CD8-positive, alpha-beta T cell (primary cell): ENCODE measurements at regions of chr10 and their contacts with region 1.

Region 1: GRCh38 chr10:74589226-74589673 is 237.2 kb upstream of the KAT6B start:
- DNase-seq: peak; percentile 70 to 97 (median 86)
- ATAC-seq: peak; percentile 76
- H3K4me3 ChIP-seq: no peak overlapping the region
- H3K4me3 Mint-ChIP-seq: peak overlapping the region; percentile 49
- H3K27ac ChIP-seq: peak overlapping the region; percentile 36 to 61
- H3K27ac Mint-ChIP-seq: peak overlapping the region; percentile 87
- H3K4me1 ChIP-seq: peaks cover 48% of the 10 kb centered on the region
- H3K4me1 Mint-ChIP-seq: peaks cover 61% of the 10 kb centered on the region
- H3K27me3 ChIP-seq: no peaks in the 10 kb centered on the region
- H3K27me3 Mint-ChIP-seq: no peaks in the 10 kb centered on the region
- CTCF ChIP-seq: no peak

Region 2: GRCh38 chr10:74176380-74177139 is 412.7 kb before region 1 on chr10:
- CTCF ChIA-PET with region 1: no interaction called
- POLR2A ChIA-PET with region 1: no interaction called
- intact Hi-C with region 1: loop called in 1 of 2 experiments (anchors 5 kb)
- DNase-seq: peak; percentile 89 to 99 (median 96)
- ATAC-seq: peak; percentile 93
- H3K4me3 ChIP-seq: peak overlapping the region; percentile 89 to 91
- H3K4me3 Mint-ChIP-seq: peak overlapping the region; percentile 93
- H3K27ac ChIP-seq: peak overlapping the region; percentile 85 to 89
- H3K27ac Mint-ChIP-seq: peak overlapping the region; percentile 97
- H3K4me1 ChIP-seq: peaks cover 34% of the 10 kb centered on the region
- H3K4me1 Mint-ChIP-seq: peaks cover 42% of the 10 kb centered on the region
- H3K27me3 ChIP-seq: no peaks in the 10 kb centered on the region
- H3K27me3 Mint-ChIP-seq: no peaks in the 10 kb centered on the region
- CTCF ChIP-seq: no peak

Region 3: GRCh38 chr10:74518061-74518460 is 71.2 kb before region 1 on chr10:
- CTCF ChIA-PET with region 1: no interaction called
- POLR2A ChIA-PET with region 1: no interaction called
- intact Hi-C with region 1: no loop called
- DNase-seq: no peak
- ATAC-seq: no peak
- H3K4me3 ChIP-seq: no peak overlapping the region
- H3K4me3 Mint-ChIP-seq: no peak overlapping the region
- H3K27ac ChIP-seq: no peak overlapping the region
- H3K27ac Mint-ChIP-seq: no peak overlapping the region
- H3K4me1 ChIP-seq: no peaks in the 10 kb centered on the region
- H3K4me1 Mint-ChIP-seq: no peaks in the 10 kb centered on the region
- H3K27me3 ChIP-seq: no peaks in the 10 kb centered on the region
- H3K27me3 Mint-ChIP-seq: no peaks in the 10 kb centered on the region
- CTCF ChIP-seq: no peak

Region 4: GRCh38 chr10:74530981-74531380 is 58.3 kb before region 1 on chr10:
- CTCF ChIA-PET with region 1: interaction called, 3 read pairs
- POLR2A ChIA-PET with region 1: no interaction called
- intact Hi-C with region 1: loop called in 1 of 2 experiments (anchors 10 kb)
- DNase-seq: no peak
- ATAC-seq: no peak
- H3K4me3 ChIP-seq: no peak overlapping the region
- H3K4me3 Mint-ChIP-seq: no peak overlapping the region
- H3K27ac ChIP-seq: no peak overlapping the region
- H3K27ac Mint-ChIP-seq: no peak overlapping the region
- H3K4me1 ChIP-seq: no peaks in the 10 kb centered on the region
- H3K4me1 Mint-ChIP-seq: no peaks in the 10 kb centered on the region
- H3K27me3 ChIP-seq: no peaks in the 10 kb centered on the region
- H3K27me3 Mint-ChIP-seq: no peaks in the 10 kb centered on the region
- CTCF ChIP-seq: no peak

Region 5: DNA sequence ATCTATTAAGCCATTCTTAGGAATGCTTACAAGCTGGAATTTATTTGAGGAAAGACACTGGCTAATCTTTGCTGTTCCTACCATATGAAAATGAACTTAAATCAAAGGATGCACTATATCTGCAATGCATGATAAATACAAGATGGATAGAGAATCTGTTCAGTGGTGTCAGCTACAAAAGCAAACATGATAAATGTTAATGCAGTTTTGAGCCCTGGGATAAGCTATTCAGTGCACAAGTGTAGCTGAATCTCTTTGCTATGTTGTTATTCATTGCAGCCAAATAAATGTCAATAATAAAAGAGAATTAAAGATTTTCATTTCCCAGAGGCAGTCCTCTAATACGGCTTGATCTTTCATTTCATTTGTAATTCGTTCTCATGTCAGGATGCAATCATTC is 13.3 kb after region 1 on chr10:
- CTCF ChIA-PET with region 1: no interaction called
- POLR2A ChIA-PET with region 1: interaction called, 3 read pairs
- intact Hi-C with region 1: loop called in 1 of 2 experiments (anchors 2 kb)
- DNase-seq: no peak
- ATAC-seq: no peak
- H3K4me3 ChIP-seq: no peak overlapping the region
- H3K4me3 Mint-ChIP-seq: no peak overlapping the region
- H3K27ac ChIP-seq: no peak overlapping the region
- H3K27ac Mint-ChIP-seq: no peak overlapping the region
- H3K4me1 ChIP-seq: no peaks in the 10 kb centered on the region
- H3K4me1 Mint-ChIP-seq: peaks cover 8% of the 10 kb centered on the region
- H3K27me3 ChIP-seq: no peaks in the 10 kb centered on the region
- H3K27me3 Mint-ChIP-seq: no peaks in the 10 kb centered on the region
- CTCF ChIP-seq: no peak

Region 6: DNA sequence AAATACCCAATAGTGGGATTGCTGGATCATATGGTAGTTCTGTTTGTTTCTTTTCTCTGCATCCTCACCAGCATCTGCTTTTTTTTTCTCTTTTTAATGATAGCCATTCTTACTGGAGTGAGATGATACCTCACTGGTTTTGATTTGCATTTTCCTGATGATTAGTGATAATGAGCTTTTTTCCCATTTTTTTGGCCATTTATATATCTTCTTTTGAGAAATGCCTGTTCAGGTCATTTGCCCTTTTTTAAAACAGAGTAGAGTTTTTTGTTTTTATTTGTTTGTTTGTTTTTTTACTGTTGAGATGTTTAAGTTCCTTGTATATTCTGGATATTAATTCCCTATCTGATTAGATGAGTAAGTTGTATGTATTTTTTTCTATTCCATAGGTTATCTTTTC is 31.4 kb after region 1 on chr10:
- CTCF ChIA-PET with region 1: no interaction called
- POLR2A ChIA-PET with region 1: no interaction called
- intact Hi-C with region 1: no loop called
- DNase-seq: no peak
- ATAC-seq: no peak
- H3K4me3 ChIP-seq: no peak overlapping the region
- H3K4me3 Mint-ChIP-seq: no peak overlapping the region
- H3K27ac ChIP-seq: no peak overlapping the region
- H3K27ac Mint-ChIP-seq: no peak overlapping the region
- H3K4me1 ChIP-seq: no peaks in the 10 kb centered on the region
- H3K4me1 Mint-ChIP-seq: no peaks in the 10 kb centered on the region
- H3K27me3 ChIP-seq: no peaks in the 10 kb centered on the region
- H3K27me3 Mint-ChIP-seq: no peaks in the 10 kb centered on the region
- CTCF ChIP-seq: no peak